PC-3 (cell line): ENCODE measurements at regions of chr7 and their contacts with region 1.

Region 1: GRCh38 chr7:66920769-66921395 is at the start of gene TMEM248:
- DNase-seq: peak; percentile 82
- ATAC-seq: peak; percentile 81
- H3K4me3 ChIP-seq: peak within 1 kb of the TSS; percentile 90
- H3K27ac ChIP-seq: peak within 1 kb of the TSS; percentile 38; the same call in 1 of the 2 replicates
- H3K4me1 ChIP-seq: peaks cover 8% of the 10 kb centered on the region; the same call in 1 of the 2 replicates
- H3K27me3 ChIP-seq: no peaks in the 10 kb centered on the region
- CTCF ChIP-seq: no peak
- total RNA-seq, gene TMEM248: 61.1 and 66.1 TPM in 2 replicates

Region 2: DNA sequence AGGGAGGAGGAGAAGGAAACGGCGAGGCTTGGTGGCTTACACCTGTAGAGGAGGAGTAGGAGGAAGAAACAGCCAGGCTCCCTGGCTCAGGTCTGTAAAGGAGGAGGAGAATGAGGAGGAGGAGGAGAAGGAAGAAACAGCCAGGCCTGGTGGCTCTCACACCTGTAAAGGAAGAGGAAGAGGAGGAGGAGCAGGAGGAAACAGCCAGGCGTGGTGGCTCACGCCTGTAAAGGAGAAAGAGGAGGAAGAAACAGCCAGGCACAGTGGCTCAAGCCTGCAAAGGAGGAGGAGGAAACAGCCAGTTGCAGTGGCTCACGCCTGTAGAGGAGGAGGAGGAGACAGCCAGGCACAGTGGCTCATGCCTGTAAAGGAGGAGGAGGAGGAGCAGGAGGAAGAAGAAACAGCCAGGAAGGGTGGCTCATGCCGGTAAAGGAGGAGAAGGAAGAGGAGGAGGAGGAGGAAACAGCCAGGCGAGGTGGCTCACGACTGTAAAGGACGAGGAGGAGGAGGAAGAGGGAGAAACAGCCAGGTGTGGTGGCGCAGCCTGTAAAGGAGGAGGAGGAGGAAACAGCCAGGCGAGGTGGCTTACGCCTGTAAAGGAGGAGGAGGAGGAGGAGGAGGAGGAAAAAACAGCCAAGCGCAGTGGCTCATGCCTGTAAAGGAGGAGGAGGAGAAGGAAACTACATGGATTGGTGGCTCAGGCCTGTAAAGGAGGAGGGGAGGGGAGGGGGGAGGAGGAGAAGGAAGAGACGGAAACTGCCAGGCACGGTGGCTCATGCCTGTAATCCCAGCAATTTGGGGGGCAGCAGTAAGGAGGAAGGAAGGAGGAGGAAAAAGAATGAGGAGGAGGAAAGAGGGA is 821.0 kb before region 1 on chr7:
- CTCF ChIA-PET with region 1: no interaction called
- POLR2A ChIA-PET with region 1: no interaction called
- intact Hi-C with region 1: no loop called
- DNase-seq: peak; percentile 89
- ATAC-seq: peak; percentile 91
- H3K4me3 ChIP-seq: peak overlapping the region; percentile 66
- H3K27ac ChIP-seq: peak overlapping the region; percentile 78
- H3K4me1 ChIP-seq: no peaks in the 10 kb centered on the region; the same call in 1 of the 2 replicates
- H3K27me3 ChIP-seq: no peaks in the 10 kb centered on the region
- CTCF ChIP-seq: no peak

Region 3: GRCh38 chr7:66946545-66946944 is 25.7 kb after region 1 on chr7:
- CTCF ChIA-PET with region 1: no interaction called
- POLR2A ChIA-PET with region 1: no interaction called
- intact Hi-C with region 1: loop called (anchors 2 kb)
- DNase-seq: no peak
- ATAC-seq: no peak
- H3K4me3 ChIP-seq: no peak overlapping the region
- H3K27ac ChIP-seq: no peak overlapping the region
- H3K4me1 ChIP-seq: 0 out of 2 replicates have a peak, but pooled peaks cover 4% of the 10 kb centered on the region
- H3K27me3 ChIP-seq: no peaks in the 10 kb centered on the region
- CTCF ChIP-seq: no peak

Region 4: DNA sequence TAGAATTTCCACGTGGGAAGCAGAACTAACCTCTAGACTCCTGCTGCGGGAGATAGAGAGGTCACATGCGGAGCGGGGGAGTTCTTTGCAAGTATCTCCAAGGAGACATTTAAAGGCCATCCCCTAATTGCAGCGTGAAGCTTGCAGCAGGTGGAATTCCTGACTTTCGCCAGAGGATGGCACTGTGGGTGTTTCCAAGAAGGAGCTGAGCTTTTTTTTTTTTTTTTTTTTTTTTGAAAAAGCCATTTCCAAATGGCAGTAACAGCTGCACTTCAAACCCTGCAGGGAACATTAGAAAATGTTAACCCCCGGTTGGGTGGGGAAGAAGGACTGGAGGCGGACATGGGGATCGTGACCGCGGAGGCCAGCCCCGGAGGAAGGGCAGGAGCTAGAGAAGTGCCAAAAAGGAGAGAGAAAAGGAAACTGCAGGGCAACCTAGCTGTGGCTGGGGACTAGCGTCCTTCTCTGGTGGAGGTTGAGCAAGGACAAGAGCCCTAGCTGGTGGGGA is 563.4 kb after region 1 on chr7:
- CTCF ChIA-PET with region 1: no interaction called
- POLR2A ChIA-PET with region 1: interaction called, 13 read pairs
- intact Hi-C with region 1: no loop called
- DNase-seq: peak; percentile 73
- ATAC-seq: peak; percentile 48
- H3K4me3 ChIP-seq: no peak overlapping the region
- H3K27ac ChIP-seq: no peak overlapping the region
- H3K4me1 ChIP-seq: no peaks in the 10 kb centered on the region
- H3K27me3 ChIP-seq: no peaks in the 10 kb centered on the region
- CTCF ChIP-seq: peak; percentile 75

Region 5: DNA sequence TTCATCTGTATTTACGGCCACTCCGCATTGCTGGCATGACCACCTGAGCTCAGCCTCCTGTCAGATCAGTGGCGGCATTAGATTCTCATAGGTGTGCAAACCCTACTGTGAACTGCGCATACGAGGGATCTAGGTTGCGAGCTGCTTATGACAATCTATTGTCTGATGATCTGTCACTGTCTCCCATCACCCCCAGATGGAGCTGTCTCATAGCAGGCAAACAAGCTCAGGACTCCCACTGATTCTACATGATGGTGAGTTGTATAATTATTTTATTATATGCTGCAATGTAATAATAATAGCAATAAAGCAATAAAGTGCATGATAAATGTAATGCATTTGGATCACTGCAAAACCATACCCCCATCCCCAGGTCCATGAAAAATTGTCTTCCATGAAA is 1504.5 kb after region 1 on chr7:
- CTCF ChIA-PET with region 1: no interaction called
- POLR2A ChIA-PET with region 1: no interaction called
- intact Hi-C with region 1: no loop called
- DNase-seq: no peak
- ATAC-seq: no peak
- H3K4me3 ChIP-seq: no peak overlapping the region
- H3K27ac ChIP-seq: no peak overlapping the region
- H3K4me1 ChIP-seq: no peaks in the 10 kb centered on the region
- H3K27me3 ChIP-seq: no peaks in the 10 kb centered on the region
- CTCF ChIP-seq: no peak